Activated CD4-positive, alpha-beta T cell treated with anti-CD3 and anti-CD28 coated beads, Interleukin-2, amount 10 ng/mL, durations not matched to agents 24 days and 14 days (primary cell): ENCODE measurements at regions of chr13 and their contacts with region 1.

Region 1: DNA sequence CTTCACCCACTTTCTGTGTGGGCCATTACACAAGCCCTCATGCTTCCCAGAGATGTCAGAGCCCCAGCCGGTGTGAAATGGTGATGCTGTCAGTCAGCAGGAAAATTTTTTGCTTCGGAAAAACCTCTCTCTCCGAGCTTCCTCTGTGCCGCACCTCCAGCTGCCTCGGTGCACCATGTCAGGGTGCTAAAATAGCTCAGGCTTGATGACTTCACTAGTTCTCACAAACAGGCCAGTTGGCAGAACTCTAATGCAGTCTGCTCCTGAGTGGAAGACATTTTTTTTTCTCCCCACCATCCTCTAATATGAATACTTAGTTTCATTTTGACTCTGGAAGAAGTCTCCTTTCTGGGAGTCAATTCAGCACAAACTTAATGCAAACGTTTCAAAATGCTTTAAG is 71.3 kb downstream of the KLF12 start:
- DNase-seq: peak; percentile 67
- H3K4me3 Mint-ChIP-seq: peak overlapping the region; percentile 74
- H3K27ac Mint-ChIP-seq: peak overlapping the region; percentile 88
- H3K4me1 Mint-ChIP-seq: peaks cover 62% of the 10 kb centered on the region
- H3K27me3 Mint-ChIP-seq: no peaks in the 10 kb centered on the region

Region 2: GRCh38 chr13:73324842-73325710 is 737.9 kb before region 1 on chr13:
- intact Hi-C with region 1: no loop called
- DNase-seq: no peak
- H3K4me3 Mint-ChIP-seq: no peak overlapping the region
- H3K27ac Mint-ChIP-seq: no peak overlapping the region
- H3K4me1 Mint-ChIP-seq: no peaks in the 10 kb centered on the region
- H3K27me3 Mint-ChIP-seq: no peaks in the 10 kb centered on the region

Region 3: DNA sequence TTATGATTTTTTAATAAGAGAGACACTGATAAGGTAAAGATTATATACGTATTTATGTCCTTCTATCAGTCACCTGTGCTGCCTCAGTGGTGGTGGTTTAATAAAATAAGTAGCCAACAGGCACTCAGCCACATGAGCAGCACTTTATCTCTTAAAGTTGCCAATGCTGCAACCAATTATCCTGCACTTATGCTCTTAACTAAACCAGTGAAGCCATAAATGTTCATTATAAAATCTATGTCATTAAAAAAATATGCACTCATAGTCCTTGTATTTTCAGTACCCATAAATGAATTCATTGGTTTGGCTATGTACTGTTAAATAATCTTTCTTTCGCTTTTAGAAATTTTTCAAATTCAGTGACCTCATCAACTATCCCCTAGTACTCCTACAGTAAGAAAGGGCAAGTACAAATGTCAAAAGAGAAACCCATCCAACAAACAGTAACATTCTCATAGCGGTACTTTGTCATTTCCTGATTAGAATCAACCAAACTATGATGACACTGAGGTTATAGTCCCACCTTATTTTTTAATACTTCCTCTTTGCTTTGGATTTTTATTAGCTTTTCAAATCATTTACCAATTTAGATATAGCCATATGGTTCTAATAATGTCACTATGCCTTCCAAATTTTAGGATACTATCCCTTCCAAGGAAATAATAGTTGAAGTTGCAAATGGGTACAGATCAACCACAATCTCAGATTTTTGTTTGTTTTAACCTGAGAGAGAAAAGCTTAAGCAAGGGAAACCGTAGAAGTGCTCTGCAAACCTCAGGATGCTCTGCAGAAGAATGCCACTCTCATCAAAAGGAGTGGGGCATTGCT is 119.6 kb before region 1 on chr13:
- intact Hi-C with region 1: loop called (anchors 5 kb)
- DNase-seq: no peak
- H3K4me3 Mint-ChIP-seq: peak overlapping the region; percentile 24
- H3K27ac Mint-ChIP-seq: peak overlapping the region; percentile 69
- H3K4me1 Mint-ChIP-seq: peaks cover 25% of the 10 kb centered on the region
- H3K27me3 Mint-ChIP-seq: no peaks in the 10 kb centered on the region

Region 4: GRCh38 chr13:73984949-73985691 is 77.8 kb before region 1 on chr13:
- intact Hi-C with region 1: loop called (anchors 2 kb)
- DNase-seq: peak; percentile 88
- H3K4me3 Mint-ChIP-seq: peak overlapping the region; percentile 75
- H3K27ac Mint-ChIP-seq: peak overlapping the region; percentile 87
- H3K4me1 Mint-ChIP-seq: peaks cover 34% of the 10 kb centered on the region
- H3K27me3 Mint-ChIP-seq: no peaks in the 10 kb centered on the region

Region 5: GRCh38 chr13:74026753-74027152 is 36.2 kb before region 1 on chr13:
- intact Hi-C with region 1: loop called (anchors 2 kb)
- DNase-seq: peak; percentile 86
- H3K4me3 Mint-ChIP-seq: peak overlapping the region; percentile 76
- H3K27ac Mint-ChIP-seq: peak overlapping the region; percentile 86
- H3K4me1 Mint-ChIP-seq: peaks cover 27% of the 10 kb centered on the region
- H3K27me3 Mint-ChIP-seq: no peaks in the 10 kb centered on the region

Region 6: GRCh38 chr13:74090869-74091605 is 28.1 kb after region 1 on chr13:
- intact Hi-C with region 1: loop called (anchors 2 kb)
- DNase-seq: no peak
- H3K4me3 Mint-ChIP-seq: peak overlapping the region; percentile 56
- H3K27ac Mint-ChIP-seq: peak overlapping the region; percentile 68
- H3K4me1 Mint-ChIP-seq: peaks cover 29% of the 10 kb centered on the region
- H3K27me3 Mint-ChIP-seq: no peaks in the 10 kb centered on the region

Region 7: DNA sequence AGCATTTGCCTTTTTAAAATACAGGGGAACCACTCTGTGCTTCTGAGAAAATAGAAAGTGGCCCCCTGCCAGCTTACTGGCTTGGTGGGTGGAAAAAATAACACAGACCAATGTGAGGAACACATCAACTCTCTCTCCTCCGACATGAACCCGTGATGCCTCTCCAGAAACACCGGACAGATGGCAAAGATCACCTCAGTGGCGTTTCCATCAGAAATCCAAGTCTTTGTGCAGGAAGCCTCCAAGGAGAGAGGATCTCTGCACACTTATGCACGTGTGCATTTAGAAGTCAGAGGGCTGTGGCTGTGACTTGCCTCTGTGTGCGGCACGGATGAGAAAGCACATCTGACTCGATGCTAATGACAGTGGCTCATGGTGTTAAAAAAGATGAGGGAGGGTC is 183.6 kb after region 1 on chr13:
- intact Hi-C with region 1: loop called (anchors 5 kb)
- DNase-seq: no peak
- H3K4me3 Mint-ChIP-seq: no peak overlapping the region
- H3K27ac Mint-ChIP-seq: no peak overlapping the region
- H3K4me1 Mint-ChIP-seq: peaks cover 54% of the 10 kb centered on the region
- H3K27me3 Mint-ChIP-seq: peaks cover 1% of the 10 kb centered on the region